ENCODE measurements at regions of chr1 and their contacts with region 1.

Region 1: GRCh38 chr1:48563021-48563420 is 91.0 kb upstream of the SPATA6 start:
- DNase-seq: no peak
- ATAC-seq: no peak
- H3K4me3 ChIP-seq: no peak overlapping the region
- H3K27ac ChIP-seq: no peak overlapping the region
- H3K4me1 ChIP-seq: no peaks in the 10 kb centered on the region
- H3K27me3 ChIP-seq: no peaks in the 10 kb centered on the region

Region 2: DNA sequence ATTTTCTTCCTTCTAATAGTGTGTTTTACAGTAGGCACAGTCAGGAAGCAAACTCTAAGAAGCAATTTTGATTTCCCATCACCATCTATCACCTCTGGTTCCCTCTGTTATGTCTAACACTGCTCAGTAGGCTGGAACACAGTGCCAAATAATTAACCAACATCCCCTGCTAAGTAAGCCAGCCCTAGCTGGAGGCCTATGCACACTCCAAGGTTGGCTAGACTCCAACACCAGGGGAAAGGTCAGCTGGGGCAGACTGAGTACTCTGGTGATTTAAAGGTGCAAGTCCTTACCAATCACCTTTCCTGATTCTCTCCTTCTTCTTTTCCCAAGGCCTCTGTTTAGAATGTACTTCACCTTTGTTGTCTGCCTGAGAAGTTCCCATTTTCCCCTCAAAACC is 260.1 kb after region 1 on chr1:
- intact Hi-C with region 1: loop called in 1 of 2 experiments (anchors 10 kb)
- DNase-seq: no peak
- ATAC-seq: no peak
- H3K4me3 ChIP-seq: no peak overlapping the region
- H3K27ac ChIP-seq: no peak overlapping the region
- H3K4me1 ChIP-seq: peaks cover 0 to 1% of the 10 kb centered on the region in 2 donors
- H3K27me3 ChIP-seq: no peaks in the 10 kb centered on the region